SK-N-SH (cell line): ENCODE measurements at regions of chr1 and their contacts with region 1.

Region 1: GRCh38 chr1:145845514-145846161 is at the start of gene NUDT17:
- DNase-seq: peak; percentile 90
- H3K4me3 ChIP-seq: peak within 1 kb of the TSS; percentile 60 to 68
- H3K27ac ChIP-seq: peak within 1 kb of the TSS; percentile 49 to 73; a peak in 3 of 4 replicates
- H3K4me1 ChIP-seq: peaks cover 3 to 14% of the 10 kb centered on the region in 2 experiments; a peak in 2 of 4 replicates
- H3K27me3 ChIP-seq: no peaks in the 10 kb centered on the region
- CTCF ChIP-seq: peak; percentile 97
- EP300 ChIP-seq: 0 out of 4 replicates have a peak, but pooled peaks of 1 of the 2 experiments have one; percentile 26
- RAD21 ChIP-seq: peak; percentile 56
- polyA plus RNA-seq, gene NUDT17: 7.8 and 8.1 TPM in 2 replicates

Region 2: DNA sequence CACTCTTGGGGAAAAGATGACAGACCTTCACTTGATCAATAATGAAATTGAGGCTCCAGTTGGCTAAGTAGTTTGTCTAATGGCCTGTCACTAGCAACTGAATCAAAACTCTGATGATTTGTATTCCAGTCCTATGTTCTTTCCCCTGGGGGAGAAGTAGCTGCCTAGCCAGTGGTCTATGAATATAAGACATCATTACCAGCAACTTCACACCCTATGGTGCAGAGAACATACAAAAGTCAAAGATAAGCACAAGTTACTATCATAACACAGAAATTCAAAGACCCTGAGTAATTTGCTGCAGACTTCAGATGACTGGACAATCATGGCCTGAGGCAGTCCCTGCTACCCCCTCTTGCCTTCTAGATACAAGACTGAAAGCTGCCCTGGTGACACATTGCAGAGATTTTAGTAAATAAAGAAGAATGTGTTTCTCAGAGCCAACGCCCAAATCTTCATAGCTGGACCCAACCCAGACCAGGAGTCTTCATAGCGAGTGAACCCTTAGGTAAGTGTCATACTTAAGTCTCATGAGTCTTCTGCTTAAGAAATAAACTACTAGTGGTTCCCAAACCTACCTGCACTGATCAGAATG is 139.5 kb before region 1 on chr1:
- CTCF ChIA-PET with region 1: no interaction called
- POLR2A ChIA-PET with region 1: no interaction called
- DNase-seq: no peak
- H3K4me3 ChIP-seq: no peak overlapping the region
- H3K27ac ChIP-seq: no peak overlapping the region
- H3K4me1 ChIP-seq: peaks cover 0 to 16% of the 10 kb centered on the region in 2 experiments; a peak in 1 of 4 replicates
- H3K27me3 ChIP-seq: no peaks in the 10 kb centered on the region
- CTCF ChIP-seq: no peak
- EP300 ChIP-seq: no peak
- RAD21 ChIP-seq: no peak

Region 3: DNA sequence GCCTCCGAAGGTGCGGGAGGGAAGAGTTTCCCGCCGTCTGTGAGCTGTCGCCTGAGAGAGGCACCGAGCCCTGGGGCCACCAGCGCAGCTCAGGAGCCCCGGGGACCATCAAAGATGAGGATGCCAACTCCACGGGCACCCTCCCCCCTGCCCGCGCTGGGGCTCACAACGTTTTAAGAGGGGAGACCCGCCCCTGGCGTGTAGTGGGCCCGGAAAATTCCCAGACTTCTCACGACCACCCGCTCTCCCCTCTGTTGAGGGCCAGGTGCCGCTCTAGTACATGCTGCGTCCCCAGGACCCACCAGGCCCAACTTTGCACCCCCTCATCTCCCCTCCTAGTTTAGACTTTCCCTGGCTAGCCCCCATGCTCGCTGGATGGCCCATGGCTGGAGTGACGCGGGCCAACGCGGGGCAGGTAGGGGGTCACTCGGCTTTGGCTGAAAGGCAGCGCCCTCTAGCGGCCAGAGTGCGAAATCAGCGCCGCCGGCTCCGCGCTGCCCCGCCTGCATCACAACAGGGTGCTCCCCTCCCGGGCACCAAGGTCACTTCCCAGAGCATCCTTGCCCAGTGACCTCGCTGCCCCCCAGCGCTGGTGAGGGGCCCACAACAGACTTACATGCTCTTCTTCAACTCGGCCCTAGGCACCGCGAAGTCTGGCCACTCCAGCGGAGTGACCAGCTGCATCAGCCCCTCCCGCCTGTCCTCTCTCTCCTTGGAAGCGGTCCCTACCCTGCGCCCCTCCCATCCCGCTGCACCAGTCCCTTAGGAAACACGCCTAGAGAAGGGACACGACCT is 124.6 kb before region 1 on chr1:
- CTCF ChIA-PET with region 1: no interaction called
- POLR2A ChIA-PET with region 1: no interaction called
- DNase-seq: peak; percentile 88
- H3K4me3 ChIP-seq: peak overlapping the region; percentile 39 to 56
- H3K27ac ChIP-seq: no peak overlapping the region
- H3K4me1 ChIP-seq: peaks cover 0 to 17% of the 10 kb centered on the region in 2 experiments; a peak in 1 of 4 replicates
- H3K27me3 ChIP-seq: no peaks in the 10 kb centered on the region
- CTCF ChIP-seq: peak; percentile 88
- EP300 ChIP-seq: no peak
- RAD21 ChIP-seq: peak; percentile 76

Region 4: DNA sequence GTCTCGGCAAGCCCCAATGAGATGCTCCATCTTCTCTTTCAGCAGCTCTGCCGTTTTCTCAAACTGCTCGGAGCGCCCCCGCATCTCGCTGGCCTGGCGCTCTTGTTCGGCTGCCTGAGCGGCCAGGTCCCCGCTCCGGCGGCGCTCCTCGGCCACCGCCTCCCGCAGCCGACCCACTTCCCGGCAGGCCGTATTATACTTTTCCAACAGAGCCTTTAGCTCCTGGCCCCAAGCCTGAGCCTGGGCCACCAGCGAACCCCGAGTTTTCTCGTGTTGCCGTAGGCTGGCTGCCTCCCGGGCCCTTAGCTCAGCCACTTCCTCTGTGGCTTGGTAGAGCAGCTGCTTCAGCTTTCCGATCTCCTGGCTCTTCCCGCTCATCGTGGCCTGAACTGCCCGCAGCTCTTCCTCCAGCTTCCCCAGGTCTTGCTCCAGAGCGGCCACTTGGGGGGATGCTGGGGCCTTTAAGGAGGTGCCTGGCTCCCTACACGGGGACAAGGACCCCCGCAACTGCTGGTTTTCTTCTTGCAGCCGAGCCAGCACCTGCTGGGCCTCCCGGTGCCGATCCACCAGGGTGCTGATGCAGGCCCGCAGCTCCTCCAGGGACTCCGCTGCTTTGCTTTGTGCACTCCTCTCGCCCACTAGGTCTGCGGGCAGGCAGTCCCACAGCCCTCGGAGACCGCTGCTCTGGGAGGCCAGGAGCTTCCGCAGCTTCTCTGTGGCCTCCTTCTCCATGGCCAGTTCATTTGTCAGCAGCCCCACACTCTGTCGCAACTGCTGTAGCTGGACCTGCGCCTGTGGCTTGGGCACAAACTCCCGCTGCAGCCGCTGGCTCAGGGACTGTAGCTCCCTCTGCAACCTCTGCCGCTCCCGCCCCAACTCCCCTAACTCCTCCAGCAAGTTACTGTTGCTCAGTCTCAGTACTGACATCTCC is 26.6 kb after region 1 on chr1:
- CTCF ChIA-PET with region 1: interaction called, 12 read pairs
- POLR2A ChIA-PET with region 1: no interaction called
- DNase-seq: no peak
- H3K4me3 ChIP-seq: no peak overlapping the region
- H3K27ac ChIP-seq: no peak overlapping the region
- H3K4me1 ChIP-seq: no peaks in the 10 kb centered on the region
- H3K27me3 ChIP-seq: no peaks in the 10 kb centered on the region
- CTCF ChIP-seq: no peak
- EP300 ChIP-seq: no peak
- RAD21 ChIP-seq: no peak

Region 5: GRCh38 chr1:145891587-145892485 is 46.2 kb after region 1 on chr1:
- CTCF ChIA-PET with region 1: interaction called, 45 read pairs
- POLR2A ChIA-PET with region 1: no interaction called
- DNase-seq: peak; percentile 87
- H3K4me3 ChIP-seq: peak overlapping the region; percentile 15 to 42
- H3K27ac ChIP-seq: peak overlapping the region; percentile 94 to 98
- H3K4me1 ChIP-seq: peaks cover 21 to 28% of the 10 kb centered on the region in 2 experiments
- H3K27me3 ChIP-seq: no peaks in the 10 kb centered on the region
- CTCF ChIP-seq: peak; percentile 99
- EP300 ChIP-seq: peak; percentile 29 to 76; a peak in 3 of 4 replicates
- RAD21 ChIP-seq: peak; percentile 95

Region 6: DNA sequence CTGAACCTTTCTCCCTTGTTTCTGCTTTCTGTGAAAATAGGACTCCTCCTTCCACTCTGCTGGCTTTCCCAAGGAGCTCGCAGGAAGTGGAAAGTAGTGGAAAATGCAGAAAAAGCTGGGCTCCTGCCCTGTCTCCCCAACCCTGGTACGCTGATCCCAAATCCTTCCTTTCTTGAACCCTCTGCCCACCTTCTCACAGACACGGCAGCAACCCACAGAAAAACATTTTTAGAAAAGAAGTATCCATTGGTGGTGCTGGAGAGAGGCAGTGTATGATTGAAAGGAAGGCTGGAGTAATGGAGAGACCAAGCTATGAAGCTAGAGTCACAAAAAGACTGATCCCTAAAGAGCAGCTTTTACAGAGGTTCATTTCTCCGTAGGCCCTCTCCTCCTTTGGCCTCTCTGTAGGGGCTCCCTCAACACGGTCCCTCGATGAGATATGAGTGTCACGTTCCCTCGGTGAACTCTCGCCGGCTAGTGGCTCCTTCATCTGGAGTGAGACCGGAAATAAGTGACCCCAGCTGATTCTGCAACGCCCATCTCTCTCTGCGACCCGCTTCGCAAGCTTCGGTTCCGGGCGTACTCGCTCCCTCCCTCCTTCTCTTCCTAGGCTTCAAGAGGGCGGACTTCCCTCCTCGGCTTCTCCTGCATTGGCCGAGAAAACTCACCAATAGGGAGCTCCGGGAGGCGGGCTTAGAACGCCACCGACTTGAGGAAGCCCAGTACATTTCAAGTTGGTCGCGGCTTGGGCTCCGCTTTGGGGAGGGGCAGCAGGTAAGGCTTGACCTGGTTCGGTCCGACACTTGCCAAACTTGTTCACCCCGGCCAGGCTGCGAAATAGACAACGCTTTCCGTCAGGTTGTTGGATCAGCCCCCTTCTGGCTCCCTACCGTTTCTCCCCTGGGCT is 118.6 kb after region 1 on chr1 and contains the starts of genes ANKRD34A and POLR3GL:
- CTCF ChIA-PET with region 1: interaction called, 16 read pairs
- POLR2A ChIA-PET with region 1: interaction called, 3 read pairs
- DNase-seq: peak; percentile 86
- H3K4me3 ChIP-seq: peak within 1 kb of the TSS; percentile 77 to 78
- H3K27ac ChIP-seq: peak within 1 kb of the TSS; percentile 83 to 98
- H3K4me1 ChIP-seq: peaks cover 19 to 40% of the 10 kb centered on the region in 2 experiments
- H3K27me3 ChIP-seq: no peaks in the 10 kb centered on the region
- CTCF ChIP-seq: no peak
- EP300 ChIP-seq: no peak
- RAD21 ChIP-seq: no peak
- polyA plus RNA-seq, gene ANKRD34A: 2.6 and 3.6 TPM in 2 replicates
- polyA plus RNA-seq, gene POLR3GL: 15.8 and 17.3 TPM in 2 replicates

Region 7: DNA sequence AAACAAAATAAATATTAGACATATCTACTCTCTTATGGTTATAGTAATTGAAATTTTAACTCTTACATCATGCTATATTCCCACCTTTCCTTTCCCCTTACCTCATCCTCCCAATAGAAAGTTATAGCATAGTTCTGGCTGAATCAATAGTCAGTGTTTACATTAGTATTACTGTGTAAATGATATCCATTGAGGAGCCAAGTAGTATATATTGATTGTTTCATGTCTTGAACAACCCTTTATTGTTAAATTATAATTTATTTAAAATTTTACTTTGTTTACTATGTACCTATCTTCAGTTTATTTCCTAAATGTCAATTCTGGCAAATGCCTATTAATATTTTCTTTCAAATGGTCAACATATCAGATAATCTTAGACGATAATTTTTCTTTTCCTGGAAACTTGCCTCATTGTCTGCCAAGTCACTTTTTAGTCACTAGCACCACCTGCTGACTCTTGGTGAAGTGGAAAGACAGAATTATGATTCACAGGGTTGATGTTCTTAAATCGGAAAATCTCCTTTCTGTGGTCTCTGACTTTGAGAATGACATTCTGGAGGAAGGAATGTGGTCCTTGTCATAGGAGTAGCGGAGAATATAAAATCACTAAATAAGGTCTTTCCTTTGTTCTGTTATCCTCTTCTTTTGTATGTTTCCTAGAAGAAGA is 167.2 kb after region 1 on chr1:
- CTCF ChIA-PET with region 1: interaction called, 34 read pairs
- POLR2A ChIA-PET with region 1: no interaction called
- DNase-seq: peak; percentile 66
- H3K4me3 ChIP-seq: peak overlapping the region in 1 of 2 experiments; percentile 18; a peak in 1 of 4 replicates
- H3K27ac ChIP-seq: peak overlapping the region in 1 of 2 experiments; percentile 61; a peak in 2 of 4 replicates
- H3K4me1 ChIP-seq: peaks cover 0 to 2% of the 10 kb centered on the region in 2 experiments; a peak in 2 of 4 replicates
- H3K27me3 ChIP-seq: no peaks in the 10 kb centered on the region
- CTCF ChIP-seq: peak; percentile 87
- EP300 ChIP-seq: 0 out of 4 replicates have a peak, but pooled peaks of 1 of the 2 experiments have one; percentile 16
- RAD21 ChIP-seq: peak; percentile 95